HEK293T (cell line): ENCODE measurements at regions of chr1 and their contacts with region 1.

Region 1: DNA sequence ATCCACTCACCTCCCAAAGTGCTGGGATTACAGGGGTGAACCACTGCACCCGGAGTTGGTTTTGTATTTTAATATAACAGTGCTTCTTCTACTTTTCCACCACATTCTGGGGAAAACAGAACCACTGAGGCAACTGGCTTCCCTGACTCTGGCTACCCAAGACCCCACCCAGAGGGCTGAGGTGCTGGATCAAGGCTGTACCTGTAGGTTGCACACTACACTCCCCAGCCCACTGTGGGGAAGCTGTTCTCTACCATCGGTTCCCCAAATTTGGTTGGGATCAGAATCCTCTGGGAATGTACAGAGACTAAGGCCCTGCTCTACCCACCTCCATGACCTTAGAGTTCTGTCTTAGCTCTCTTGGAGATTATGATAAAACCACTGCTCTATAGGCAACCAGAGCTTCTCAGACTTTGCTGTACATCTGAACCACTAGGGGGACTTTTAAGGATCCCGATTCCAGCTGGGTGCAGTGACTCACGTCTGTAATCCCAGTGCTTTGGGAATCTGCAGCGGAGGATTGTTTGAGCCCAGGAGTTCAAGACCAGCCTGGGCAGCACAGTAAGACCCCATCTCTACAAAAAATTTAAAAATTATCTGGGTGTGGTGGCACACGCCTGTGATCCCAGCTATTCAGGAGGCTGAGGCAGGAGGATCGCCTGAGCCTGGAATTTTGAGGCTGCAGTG is 51.6 kb downstream of the GNG4 start:
- DNase-seq: peak; percentile 61

Region 2: DNA sequence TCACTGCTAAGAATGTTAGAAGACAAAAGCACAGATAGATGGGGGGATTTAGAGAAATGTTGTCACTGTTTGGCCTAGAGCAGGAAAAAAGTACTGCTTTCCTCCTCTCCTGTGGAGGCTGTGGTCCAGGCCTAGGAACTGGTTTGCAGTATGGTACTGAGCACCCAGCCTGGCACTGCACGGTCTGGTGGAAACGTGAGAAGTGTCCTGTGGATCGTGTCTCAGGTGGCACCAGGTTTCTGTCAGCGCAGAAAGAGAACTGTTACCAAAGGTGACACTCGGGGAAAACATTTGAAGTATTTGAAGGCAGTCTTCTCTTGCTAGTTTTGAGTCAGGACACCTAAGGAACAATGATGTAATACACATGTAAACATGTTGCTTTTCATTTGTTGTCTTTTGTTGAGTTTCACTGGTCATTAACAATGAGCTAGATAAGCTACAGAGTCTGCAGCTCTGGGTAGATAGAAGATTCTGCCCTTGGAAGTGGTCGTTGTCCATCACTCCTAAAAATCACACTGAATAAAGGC is 156.8 kb before region 1 on chr1:
- CTCF ChIA-PET with region 1: interaction called, 13 read pairs
- POLR2A ChIA-PET with region 1: no interaction called
- DNase-seq: no peak

Region 3: GRCh38 chr1:235617808-235618207 is 19.8 kb after region 1 on chr1:
- CTCF ChIA-PET with region 1: interaction called, 15 read pairs
- POLR2A ChIA-PET with region 1: no interaction called
- DNase-seq: no peak

Region 4: DNA sequence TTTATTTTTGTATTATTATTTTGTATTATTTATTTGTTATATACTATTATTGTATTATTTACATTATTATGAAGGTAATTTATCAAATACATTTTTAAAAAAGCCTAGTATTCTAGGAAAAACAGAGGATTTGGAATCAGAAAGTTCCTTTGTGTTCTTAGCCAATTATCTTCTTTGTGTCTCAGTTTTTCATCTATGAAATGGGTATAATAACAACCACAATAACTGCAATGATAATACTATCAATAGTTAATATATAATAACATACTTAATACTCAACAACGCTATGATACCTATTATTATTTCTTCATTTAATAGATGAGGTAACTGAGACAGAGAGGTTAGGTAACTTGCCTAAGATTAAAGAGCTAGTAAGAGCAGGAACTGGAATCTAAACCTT is 132.0 kb after region 1 on chr1:
- CTCF ChIA-PET with region 1: interaction called, 12 read pairs
- POLR2A ChIA-PET with region 1: no interaction called
- DNase-seq: no peak